ENCODE measurements at regions of chr1 and their contacts with region 1.

Region 1: DNA sequence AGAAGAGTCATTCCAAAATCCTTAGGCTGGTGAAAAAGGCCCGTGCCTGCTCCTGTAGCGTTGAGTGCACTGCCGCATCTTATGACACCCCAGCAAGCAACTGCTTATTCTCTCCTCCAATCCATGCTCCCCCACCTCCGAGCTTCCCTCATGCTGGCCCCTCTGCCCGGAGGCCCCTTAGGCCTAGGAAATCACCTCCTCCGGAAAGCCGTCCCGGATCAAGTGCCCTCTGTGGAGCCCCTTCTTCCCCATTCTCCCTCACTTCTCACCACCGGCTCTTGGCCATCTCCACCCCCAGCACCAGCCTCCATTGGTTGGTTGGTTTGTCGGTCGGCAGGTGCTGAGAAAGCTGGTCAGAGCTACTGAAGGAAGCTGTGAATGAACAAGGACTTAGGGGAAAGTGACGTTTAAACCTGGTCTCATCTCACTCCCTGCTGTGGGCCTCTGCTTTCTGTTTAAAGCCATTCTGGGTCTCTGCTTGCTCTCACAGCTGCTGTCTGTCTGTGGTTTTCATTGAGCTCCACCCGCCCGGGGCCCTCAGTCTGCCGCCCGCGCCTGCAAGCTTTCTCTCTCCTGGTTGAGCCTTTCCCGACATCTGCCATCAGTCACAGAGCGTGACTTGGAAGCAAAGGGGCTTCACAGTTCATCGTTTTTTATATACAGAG is 122.2 kb downstream of the KCNN3 start:
- DNase-seq: peak; percentile 59
- H3K4me3 Mint-ChIP-seq: peak overlapping the region; percentile 85
- H3K27ac Mint-ChIP-seq: peak overlapping the region; percentile 94
- H3K4me1 Mint-ChIP-seq: peaks cover 82% of the 10 kb centered on the region
- H3K27me3 Mint-ChIP-seq: peaks cover 7% of the 10 kb centered on the region

Region 2: GRCh38 chr1:154335025-154335714 is 412.7 kb before region 1 on chr1:
- intact Hi-C with region 1: no loop called
- DNase-seq: peak; percentile 78
- H3K4me3 Mint-ChIP-seq: no peak overlapping the region
- H3K27ac Mint-ChIP-seq: peak overlapping the region; percentile 75
- H3K4me1 Mint-ChIP-seq: peaks cover 65% of the 10 kb centered on the region
- H3K27me3 Mint-ChIP-seq: no peaks in the 10 kb centered on the region

Region 3: DNA sequence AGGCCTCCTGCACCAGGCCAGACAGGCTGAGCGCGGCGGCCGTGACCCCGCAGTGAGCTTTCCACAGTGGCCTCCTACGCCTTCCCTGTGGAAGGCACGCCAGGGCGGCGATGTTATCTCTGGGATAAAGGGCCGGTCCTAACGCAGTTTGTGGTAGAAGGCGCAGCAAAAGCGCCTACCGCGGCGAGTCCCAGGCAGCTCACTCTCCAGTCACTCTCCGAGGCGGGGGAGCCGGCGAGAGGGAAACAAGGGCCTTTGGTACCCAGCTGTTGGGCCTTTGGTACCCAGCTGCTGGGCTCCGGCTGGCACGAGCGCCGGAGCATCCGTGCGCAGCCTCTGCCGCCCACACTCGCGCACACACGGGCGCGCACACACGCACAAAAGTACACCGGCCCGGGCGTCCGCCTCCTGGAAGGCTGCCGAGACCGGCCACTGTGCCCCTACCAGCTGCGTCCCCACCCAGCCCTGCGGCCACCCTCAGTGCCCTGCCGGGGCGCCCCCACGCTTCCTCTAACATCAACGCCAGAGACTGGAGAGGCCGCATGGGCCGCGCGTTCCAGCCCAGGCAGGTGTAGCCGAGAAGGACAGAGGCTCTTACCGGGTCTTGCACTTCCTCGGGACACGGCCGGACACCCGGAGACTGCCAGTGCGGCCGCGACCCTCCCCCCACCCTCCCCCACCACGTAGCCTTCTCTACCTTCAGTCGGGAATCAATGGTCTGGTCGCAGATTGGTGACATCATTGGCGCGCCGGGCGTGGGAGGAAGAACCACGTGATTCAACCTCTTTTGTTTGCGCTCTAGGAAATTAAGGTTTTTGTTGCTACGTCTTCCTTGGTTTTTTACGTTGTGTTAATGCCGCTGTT is 120.4 kb before region 1 on chr1:
- intact Hi-C with region 1: loop called (anchors 5 kb)
- DNase-seq: peak; percentile 83
- H3K4me3 Mint-ChIP-seq: peak overlapping the region; percentile 99
- H3K27ac Mint-ChIP-seq: peak overlapping the region; percentile 98
- H3K4me1 Mint-ChIP-seq: peaks cover 51% of the 10 kb centered on the region
- H3K27me3 Mint-ChIP-seq: peaks cover 12% of the 10 kb centered on the region

Region 4: DNA sequence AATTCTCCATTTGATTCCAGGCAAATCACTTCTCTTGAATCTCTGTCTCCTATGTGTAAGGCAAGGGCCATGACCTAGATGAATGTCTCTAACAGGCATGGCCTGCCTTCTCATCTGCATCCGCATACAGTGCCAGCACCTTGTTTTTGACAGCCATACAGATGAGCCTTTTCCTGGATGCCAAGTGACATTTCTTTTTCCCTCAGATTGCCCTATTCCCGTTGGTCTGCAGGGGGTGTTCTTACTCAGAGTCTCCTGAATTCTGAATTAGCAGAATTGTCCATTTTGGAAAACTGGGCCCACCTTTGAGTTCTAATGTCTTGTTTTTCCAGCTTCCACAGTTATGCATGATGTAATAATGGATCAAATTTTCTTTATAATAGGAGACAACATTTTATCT is 51.9 kb before region 1 on chr1:
- intact Hi-C with region 1: loop called (anchors 10 kb)
- DNase-seq: no peak
- H3K4me3 Mint-ChIP-seq: no peak overlapping the region
- H3K27ac Mint-ChIP-seq: no peak overlapping the region
- H3K4me1 Mint-ChIP-seq: peaks cover 6% of the 10 kb centered on the region
- H3K27me3 Mint-ChIP-seq: peaks cover 28% of the 10 kb centered on the region

Region 5: GRCh38 chr1:154730259-154730658 is 17.6 kb before region 1 on chr1:
- intact Hi-C with region 1: loop called (anchors 2 kb)
- DNase-seq: no peak
- H3K4me3 Mint-ChIP-seq: no peak overlapping the region
- H3K27ac Mint-ChIP-seq: no peak overlapping the region
- H3K4me1 Mint-ChIP-seq: peaks cover 65% of the 10 kb centered on the region
- H3K27me3 Mint-ChIP-seq: peaks cover 2% of the 10 kb centered on the region

Region 6: GRCh38 chr1:154760469-154760933 is 12.6 kb after region 1 on chr1:
- intact Hi-C with region 1: loop called (anchors 1 kb)
- DNase-seq: peak; percentile 76
- H3K4me3 Mint-ChIP-seq: peak overlapping the region; percentile 70
- H3K27ac Mint-ChIP-seq: peak overlapping the region; percentile 88
- H3K4me1 Mint-ChIP-seq: peaks cover 53% of the 10 kb centered on the region
- H3K27me3 Mint-ChIP-seq: peaks cover 14% of the 10 kb centered on the region

Region 7: GRCh38 chr1:154791292-154792166 is 43.7 kb after region 1 on chr1:
- intact Hi-C with region 1: loop called (anchors 1 kb)
- DNase-seq: peak; percentile 78
- H3K4me3 Mint-ChIP-seq: peak overlapping the region; percentile 53
- H3K27ac Mint-ChIP-seq: peak overlapping the region; percentile 86
- H3K4me1 Mint-ChIP-seq: peaks cover 32% of the 10 kb centered on the region
- H3K27me3 Mint-ChIP-seq: peaks cover 4% of the 10 kb centered on the region

Region 8: GRCh38 chr1:154931940-154932487 is 184.1 kb after region 1 on chr1:
- intact Hi-C with region 1: no loop called
- DNase-seq: no peak
- H3K4me3 Mint-ChIP-seq: no peak overlapping the region
- H3K27ac Mint-ChIP-seq: no peak overlapping the region
- H3K4me1 Mint-ChIP-seq: peaks cover 20% of the 10 kb centered on the region
- H3K27me3 Mint-ChIP-seq: no peaks in the 10 kb centered on the region

Measured in activated T-helper 1 cell treated with anti-CD3 and anti-CD28 coated beads, Interleukin-12 subunit alpha, Interleukin-12 subunit beta, Interleukin-2, Interleukin-4 antibody, amounts not matched to agents 30 ng/mL and 10 ng/mL and 1 ng/mL, durations not matched to agents 14 hours and 24 hours and 36 hours (primary cell).